ENCODE measurements at regions of chr15 and their contacts with region 1.

Region 1: DNA sequence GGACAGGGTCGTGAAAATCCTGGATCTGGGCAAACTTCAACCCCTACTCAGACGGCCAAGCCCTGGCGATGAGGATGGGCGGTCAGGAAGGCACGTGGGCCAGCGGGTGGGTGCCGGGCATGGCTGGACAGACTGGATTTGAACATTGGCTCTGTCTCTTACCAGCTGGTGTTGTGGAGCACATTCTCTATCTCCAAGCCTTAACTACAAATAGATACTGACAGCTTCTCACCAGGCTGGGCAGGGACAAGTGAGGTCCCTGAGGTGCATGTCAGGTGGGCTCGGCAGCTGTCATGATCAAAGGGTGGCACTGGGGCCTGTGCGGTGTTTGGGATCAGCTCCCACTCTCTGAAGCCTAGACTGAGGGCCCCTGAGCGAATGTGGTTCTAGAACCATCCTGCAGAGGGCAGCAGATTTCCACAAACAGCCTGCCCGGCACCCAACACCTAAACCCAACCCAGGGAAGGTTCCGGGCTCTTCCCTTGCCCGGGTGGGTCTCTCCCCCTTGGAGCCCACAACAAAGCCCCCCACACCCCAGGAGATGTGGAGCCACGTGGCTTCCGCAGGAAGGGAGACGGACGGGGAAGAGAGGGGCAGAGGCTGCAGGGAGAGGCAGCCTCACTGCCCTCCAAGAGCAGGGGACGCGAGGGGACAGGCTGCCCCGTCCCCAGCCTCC is 58.4 kb downstream of the RGMA start:
- DNase-seq: peak; percentile 50
- ATAC-seq: peak; percentile 81
- H3K4me3 ChIP-seq: peak overlapping the region in 2 of 3 experiments; percentile 17 to 67; a peak in 2 of 6 replicates
- H3K27ac ChIP-seq: no peak overlapping the region
- H3K4me1 ChIP-seq: peaks cover 21% of the 10 kb centered on the region
- H3K27me3 ChIP-seq: 0 out of 5 replicates have a peak, but pooled peaks cover 0 to 8% of the 10 kb centered on the region in 2 experiments
- CTCF ChIP-seq: peak; percentile 90
- EP300 ChIP-seq: no peak
- POLR2A ChIP-seq: no peak
- RAD21 ChIP-seq: peak; percentile 81

Region 2: DNA sequence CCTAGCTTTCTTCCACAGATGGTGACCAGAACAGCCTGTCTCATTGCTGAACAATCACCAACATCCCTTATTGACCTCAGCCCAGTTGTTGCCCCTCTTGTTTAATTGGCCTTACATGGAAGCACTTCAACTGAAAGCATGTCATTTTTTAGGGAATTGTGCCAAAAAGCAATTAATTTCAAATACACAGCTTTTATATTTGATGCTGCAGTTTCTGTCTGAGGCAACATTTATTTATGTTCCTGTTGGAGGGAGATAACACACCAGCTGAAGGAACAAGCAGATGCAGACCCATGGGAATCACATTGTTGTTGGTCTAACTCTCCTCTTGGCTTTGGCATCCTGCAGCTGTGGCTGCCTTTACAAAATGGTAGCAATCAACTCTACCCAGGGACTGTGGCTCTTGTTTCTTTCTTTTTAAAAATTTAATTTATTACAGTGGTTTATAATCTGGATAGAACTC is 556.5 kb after region 1 on chr15:
- CTCF ChIA-PET with region 1: no interaction called
- POLR2A ChIA-PET with region 1: no interaction called
- in situ Hi-C with region 1: no loop called
- intact Hi-C with region 1: no loop called
- DNase-seq: no peak
- ATAC-seq: no peak
- H3K4me3 ChIP-seq: no peak overlapping the region
- H3K27ac ChIP-seq: no peak overlapping the region
- H3K4me1 ChIP-seq: no peaks in the 10 kb centered on the region
- H3K27me3 ChIP-seq: no peaks in the 10 kb centered on the region; a peak in 1 of 5 replicates
- CTCF ChIP-seq: no peak
- EP300 ChIP-seq: no peak
- POLR2A ChIP-seq: no peak
- RAD21 ChIP-seq: no peak

Region 3: DNA sequence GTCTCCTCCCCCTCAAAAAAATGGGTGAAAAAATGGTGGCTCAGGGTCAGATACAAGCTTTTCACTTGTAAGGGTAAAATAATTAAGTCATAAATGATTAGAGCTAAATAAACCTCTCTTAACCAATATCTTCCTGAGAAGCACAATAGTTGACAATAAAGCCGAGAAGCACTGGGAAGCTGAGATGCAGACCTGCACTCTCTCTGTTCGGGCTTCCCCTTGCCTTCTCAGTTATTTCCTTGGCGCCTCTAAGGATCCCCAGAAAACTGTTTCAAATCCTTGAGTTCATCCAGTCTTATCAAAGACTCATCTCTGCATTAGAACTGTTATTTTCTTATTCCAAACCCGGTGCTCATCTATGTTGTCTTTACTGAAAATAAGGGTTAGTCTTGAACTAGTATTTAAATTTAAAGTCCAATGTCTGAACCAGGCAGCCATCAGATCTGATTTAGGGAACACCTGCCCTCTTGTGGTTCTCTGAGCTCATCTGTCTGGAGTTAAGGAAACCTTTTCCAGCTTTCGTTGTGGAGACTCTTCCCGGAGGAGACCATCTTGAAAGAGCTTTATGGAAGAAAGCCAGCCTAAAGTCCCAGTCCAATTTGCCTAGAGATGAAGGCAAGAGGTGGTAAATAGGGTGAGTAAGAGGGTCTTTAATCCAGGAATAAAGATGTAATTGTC is 944.4 kb after region 1 on chr15:
- CTCF ChIA-PET with region 1: no interaction called
- POLR2A ChIA-PET with region 1: no interaction called
- in situ Hi-C with region 1: loop called (anchors 5 kb)
- intact Hi-C with region 1: loop called (anchors 1 kb)
- DNase-seq: peak; percentile 22
- ATAC-seq: peak; percentile 81
- H3K4me3 ChIP-seq: no peak overlapping the region
- H3K27ac ChIP-seq: no peak overlapping the region
- H3K4me1 ChIP-seq: no peaks in the 10 kb centered on the region
- H3K27me3 ChIP-seq: no peaks in the 10 kb centered on the region
- CTCF ChIP-seq: peak; percentile 48
- EP300 ChIP-seq: no peak
- POLR2A ChIP-seq: no peak
- RAD21 ChIP-seq: no peak

Region 4: DNA sequence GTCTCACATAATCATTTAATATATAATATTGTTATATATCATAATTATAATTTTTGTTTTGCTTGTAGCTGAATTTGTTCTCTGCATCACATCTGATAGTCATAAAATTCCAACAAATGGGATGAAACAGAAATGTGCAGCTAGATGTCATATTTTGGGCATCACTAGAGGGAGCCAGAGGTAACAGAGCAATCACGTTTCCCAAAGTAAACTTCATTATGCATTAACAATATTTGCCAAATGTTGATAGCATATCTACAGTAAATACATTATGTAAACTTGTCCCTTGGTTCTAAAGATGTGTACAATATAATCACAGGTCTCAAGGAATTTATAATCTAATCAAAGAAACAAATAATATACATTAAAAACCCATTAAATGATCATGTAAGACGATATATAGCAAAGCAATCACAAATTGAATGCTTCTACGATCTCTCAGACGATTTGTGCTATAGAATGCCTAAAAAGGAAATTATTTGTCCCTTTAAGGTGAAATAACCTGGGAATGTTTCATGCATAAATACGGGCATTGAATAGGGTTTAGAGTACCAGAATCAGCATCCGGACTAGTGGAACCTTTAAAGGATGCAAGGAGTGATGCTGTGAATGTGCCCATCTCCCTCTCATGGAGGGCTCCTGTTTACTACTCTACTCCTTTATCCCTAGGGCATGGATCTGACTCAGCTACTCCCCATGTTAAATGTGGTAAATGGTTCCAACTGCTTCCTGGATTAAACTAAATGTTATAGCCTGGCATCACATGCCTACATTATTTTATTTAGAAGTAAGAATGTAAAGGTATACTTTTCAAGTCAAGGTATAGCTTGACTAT is 966.7 kb after region 1 on chr15:
- CTCF ChIA-PET with region 1: no interaction called
- POLR2A ChIA-PET with region 1: no interaction called
- in situ Hi-C with region 1: no loop called
- intact Hi-C with region 1: loop called (anchors 5 kb)
- DNase-seq: peak; percentile 8
- ATAC-seq: peak; percentile 55; the same call in 2 of the 3 replicates
- H3K4me3 ChIP-seq: no peak overlapping the region
- H3K27ac ChIP-seq: no peak overlapping the region
- H3K4me1 ChIP-seq: no peaks in the 10 kb centered on the region
- H3K27me3 ChIP-seq: peaks cover 0 to 3% of the 10 kb centered on the region in 2 experiments; a peak in 1 of 5 replicates
- CTCF ChIP-seq: peak; percentile 49
- EP300 ChIP-seq: no peak
- POLR2A ChIP-seq: no peak
- RAD21 ChIP-seq: no peak

Region 5: GRCh38 chr15:94119923-94120775 is 1089.6 kb after region 1 on chr15:
- CTCF ChIA-PET with region 1: interaction called, 30 read pairs
- POLR2A ChIA-PET with region 1: interaction called, 5 read pairs
- in situ Hi-C with region 1: loop called (anchors 5 kb)
- intact Hi-C with region 1: no loop called
- DNase-seq: peak; percentile 71
- ATAC-seq: peak; percentile 99
- H3K4me3 ChIP-seq: no peak overlapping the region
- H3K27ac ChIP-seq: no peak overlapping the region
- H3K4me1 ChIP-seq: no peaks in the 10 kb centered on the region
- H3K27me3 ChIP-seq: no peaks in the 10 kb centered on the region
- CTCF ChIP-seq: peak; percentile 92
- EP300 ChIP-seq: no peak
- POLR2A ChIP-seq: no peak
- RAD21 ChIP-seq: peak; percentile 76

Measured in HepG2 (cell line).